ENCODE measurements at regions of chr15 and their contacts with region 1.

Region 1: DNA sequence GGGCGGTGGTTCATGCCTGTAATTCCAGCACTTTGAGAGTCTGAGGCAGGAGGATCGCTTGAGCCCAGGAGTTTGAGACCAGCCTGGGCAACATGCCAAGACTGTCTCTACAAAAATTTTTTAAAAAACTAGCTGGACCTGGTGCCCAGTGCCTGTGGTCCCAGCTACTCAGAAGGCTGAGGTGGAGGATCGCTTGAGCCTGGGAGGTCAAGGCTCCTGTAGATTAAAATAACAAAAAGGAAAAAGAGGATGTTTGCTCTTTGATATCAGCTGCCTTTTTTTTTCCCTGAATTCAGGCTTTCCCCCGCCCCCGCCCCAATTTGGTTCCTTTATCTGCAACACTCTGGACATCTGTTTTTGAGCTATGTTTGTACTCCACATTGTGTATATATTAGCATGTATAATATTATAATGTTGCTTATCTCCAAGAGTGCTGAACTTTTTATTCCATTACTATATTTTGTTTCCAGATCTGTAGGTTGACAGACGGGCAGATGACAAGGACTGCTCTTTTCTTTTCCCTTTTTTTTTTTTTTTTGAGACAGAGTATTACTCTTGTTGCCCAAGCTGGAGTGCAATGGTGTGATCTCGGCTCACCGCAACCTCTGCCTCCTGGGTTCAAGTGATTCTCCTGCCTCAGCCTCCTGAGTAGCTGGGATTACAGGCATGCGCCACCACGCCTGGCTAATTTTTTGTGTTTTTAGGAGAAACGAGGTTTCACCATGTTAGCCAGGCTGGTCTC is 4.6 kb downstream of the SNAP23 start:
- DNase-seq: peak in 2 of 3 donors; percentile 39 to 60
- H3K4me3 ChIP-seq: peak overlapping the region in 1 of 7 experiments; percentile 19
- H3K27ac ChIP-seq: peak overlapping the region in 1 of 2 experiments; percentile 71
- H3K4me1 ChIP-seq: peaks cover 11 to 53% (median 36%) of the 10 kb centered on the region in 4 experiments
- H3K27me3 ChIP-seq: no peaks in the 10 kb centered on the region

Region 2: DNA sequence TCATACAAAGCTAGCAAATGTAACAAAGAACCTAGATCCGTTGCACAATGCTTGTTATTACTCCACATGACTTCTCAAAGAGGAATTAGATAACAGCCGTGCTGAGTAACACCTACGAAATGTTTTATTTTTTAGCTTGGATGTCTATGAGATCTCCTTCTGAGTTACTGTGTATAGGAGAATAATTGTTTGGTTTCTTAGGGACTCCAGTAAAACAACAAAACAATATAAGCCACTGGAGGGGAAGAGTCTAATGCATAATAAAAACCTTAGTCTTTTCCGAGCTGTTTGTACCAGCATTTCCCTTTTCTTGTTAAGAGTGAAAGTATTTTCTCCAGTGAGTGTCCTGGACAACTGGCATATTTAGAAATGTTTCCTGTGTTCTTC is 11.0 kb after region 1 on chr15:
- CTCF ChIA-PET with region 1: interaction called, 9 read pairs
- POLR2A ChIA-PET with region 1: interaction called, 11 read pairs
- DNase-seq: peak in 2 of 3 donors; percentile 48 to 57
- H3K4me3 ChIP-seq: peak overlapping the region in 6 of 7 experiments; percentile 10 to 75 (median 51)
- H3K27ac ChIP-seq: peak overlapping the region; percentile 69 to 88
- H3K4me1 ChIP-seq: peaks cover 12 to 22% (median 20%) of the 10 kb centered on the region in 4 experiments
- H3K27me3 ChIP-seq: no peaks in the 10 kb centered on the region

Region 3: GRCh38 chr15:42523331-42523730 is 23.3 kb after region 1 on chr15:
- CTCF ChIA-PET with region 1: interaction called, 10 read pairs
- POLR2A ChIA-PET with region 1: no interaction called
- DNase-seq: no peak
- H3K4me3 ChIP-seq: no peak overlapping the region
- H3K27ac ChIP-seq: no peak overlapping the region
- H3K4me1 ChIP-seq: no peaks in the 10 kb centered on the region
- H3K27me3 ChIP-seq: no peaks in the 10 kb centered on the region

Measured in common myeloid progenitor, CD34-positive (primary cell).